ENCODE measurements at regions of chr21 and their contacts with region 1.

Region 1: GRCh38 chr21:32403201-32403777 is 9.2 kb upstream of the EVA1C start:
- DNase-seq: peak; percentile 78
- ATAC-seq: peak; percentile 92
- H3K4me3 Mint-ChIP-seq: no peak overlapping the region
- H3K27ac Mint-ChIP-seq: no peak overlapping the region
- H3K4me1 Mint-ChIP-seq: peaks cover 3% of the 10 kb centered on the region
- H3K27me3 Mint-ChIP-seq: peaks cover 5% of the 10 kb centered on the region
- CTCF ChIP-seq: peak; percentile 83

Region 2: GRCh38 chr21:32329331-32329730 is 74.0 kb before region 1 on chr21:
- CTCF ChIA-PET with region 1: no interaction called
- POLR2A ChIA-PET with region 1: no interaction called
- intact Hi-C with region 1: no loop called
- DNase-seq: no peak
- ATAC-seq: no peak
- H3K4me3 Mint-ChIP-seq: no peak overlapping the region
- H3K27ac Mint-ChIP-seq: no peak overlapping the region
- H3K4me1 Mint-ChIP-seq: no peaks in the 10 kb centered on the region
- H3K27me3 Mint-ChIP-seq: no peaks in the 10 kb centered on the region
- CTCF ChIP-seq: no peak

Region 3: DNA sequence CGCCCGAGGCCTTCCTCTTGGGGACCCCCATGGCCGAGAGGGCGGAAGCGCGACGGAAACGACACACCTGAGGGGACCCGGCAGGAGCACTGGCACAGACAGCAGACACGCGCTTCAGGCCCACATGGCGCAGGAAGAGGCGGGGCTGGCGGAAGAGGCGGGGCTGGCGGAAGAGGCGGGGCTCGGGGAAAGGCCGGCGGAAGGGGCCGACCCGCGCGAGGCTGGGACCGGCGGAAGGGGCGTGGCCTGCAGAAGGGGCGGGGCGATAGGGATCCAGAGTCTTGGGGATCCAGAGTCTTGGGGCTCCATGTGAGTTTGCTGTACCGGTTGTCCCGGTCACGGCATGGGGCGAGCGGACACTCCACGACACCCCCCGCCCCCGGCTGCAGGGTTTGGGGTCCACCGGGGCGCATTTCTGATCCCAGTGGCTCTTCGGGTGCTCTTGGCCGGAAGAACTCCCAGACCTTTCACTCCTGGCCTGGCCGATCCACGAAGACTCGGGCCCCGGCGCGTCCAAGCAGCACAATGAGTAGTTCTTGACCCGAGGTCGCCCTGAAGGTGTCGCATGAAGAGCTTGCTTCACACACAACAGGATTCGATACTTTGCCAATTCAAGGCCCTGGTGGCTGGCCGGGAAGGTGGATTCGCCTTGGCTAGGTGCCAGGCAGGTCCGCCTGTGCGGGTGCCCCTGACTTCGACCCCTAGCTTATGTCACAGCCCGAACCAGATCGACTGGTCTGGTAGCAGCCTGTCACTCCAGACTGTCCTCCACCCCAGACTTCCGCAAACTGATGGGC is 10.2 kb before region 1 on chr21 and contains the start of gene URB1:
- CTCF ChIA-PET with region 1: interaction called, 26 read pairs
- POLR2A ChIA-PET with region 1: interaction called, 5 read pairs
- intact Hi-C with region 1: no loop called
- DNase-seq: peak; percentile 93
- ATAC-seq: peak; percentile 99
- H3K4me3 Mint-ChIP-seq: peak within 1 kb of the TSS; percentile 86
- H3K27ac Mint-ChIP-seq: peak within 1 kb of the TSS; percentile 83
- H3K4me1 Mint-ChIP-seq: peaks cover 44% of the 10 kb centered on the region
- H3K27me3 Mint-ChIP-seq: peaks cover 3% of the 10 kb centered on the region
- CTCF ChIP-seq: no peak
- total RNA-seq, gene URB1: 30.9 to 31.8 TPM

Region 4: GRCh38 chr21:32468564-32469170 is 65.4 kb after region 1 on chr21:
- CTCF ChIA-PET with region 1: no interaction called
- POLR2A ChIA-PET with region 1: no interaction called
- intact Hi-C with region 1: no loop called
- DNase-seq: no peak
- ATAC-seq: no peak
- H3K4me3 Mint-ChIP-seq: no peak overlapping the region
- H3K27ac Mint-ChIP-seq: no peak overlapping the region
- H3K4me1 Mint-ChIP-seq: peaks cover 5% of the 10 kb centered on the region
- H3K27me3 Mint-ChIP-seq: no peaks in the 10 kb centered on the region
- CTCF ChIP-seq: no peak

Region 5: GRCh38 chr21:32562426-32562825 is 159.1 kb after region 1 on chr21:
- CTCF ChIA-PET with region 1: interaction called, 56 read pairs
- POLR2A ChIA-PET with region 1: no interaction called
- intact Hi-C with region 1: no loop called
- DNase-seq: peak; percentile 68
- ATAC-seq: peak; percentile 88
- H3K4me3 Mint-ChIP-seq: no peak overlapping the region
- H3K27ac Mint-ChIP-seq: peak overlapping the region; percentile 27
- H3K4me1 Mint-ChIP-seq: peaks cover 10% of the 10 kb centered on the region
- H3K27me3 Mint-ChIP-seq: no peaks in the 10 kb centered on the region
- CTCF ChIP-seq: no peak